ENCODE measurements at regions of chr1 and their contacts with region 1.

Region 1: GRCh38 chr1:67853704-67854103 is 20.4 kb upstream of the GNG12 start:
- DNase-seq: no peak
- ATAC-seq: peak; percentile 80; the same call in 1 of the 2 replicates
- H3K4me3 ChIP-seq: no peak overlapping the region
- H3K27ac ChIP-seq: no peak overlapping the region
- H3K4me1 ChIP-seq: peaks cover 8% of the 10 kb centered on the region; the same call in 1 of the 2 replicates
- H3K27me3 ChIP-seq: 0 out of 2 replicates have a peak, but pooled peaks cover 2% of the 10 kb centered on the region
- CTCF ChIP-seq: peak; percentile 84

Region 2: DNA sequence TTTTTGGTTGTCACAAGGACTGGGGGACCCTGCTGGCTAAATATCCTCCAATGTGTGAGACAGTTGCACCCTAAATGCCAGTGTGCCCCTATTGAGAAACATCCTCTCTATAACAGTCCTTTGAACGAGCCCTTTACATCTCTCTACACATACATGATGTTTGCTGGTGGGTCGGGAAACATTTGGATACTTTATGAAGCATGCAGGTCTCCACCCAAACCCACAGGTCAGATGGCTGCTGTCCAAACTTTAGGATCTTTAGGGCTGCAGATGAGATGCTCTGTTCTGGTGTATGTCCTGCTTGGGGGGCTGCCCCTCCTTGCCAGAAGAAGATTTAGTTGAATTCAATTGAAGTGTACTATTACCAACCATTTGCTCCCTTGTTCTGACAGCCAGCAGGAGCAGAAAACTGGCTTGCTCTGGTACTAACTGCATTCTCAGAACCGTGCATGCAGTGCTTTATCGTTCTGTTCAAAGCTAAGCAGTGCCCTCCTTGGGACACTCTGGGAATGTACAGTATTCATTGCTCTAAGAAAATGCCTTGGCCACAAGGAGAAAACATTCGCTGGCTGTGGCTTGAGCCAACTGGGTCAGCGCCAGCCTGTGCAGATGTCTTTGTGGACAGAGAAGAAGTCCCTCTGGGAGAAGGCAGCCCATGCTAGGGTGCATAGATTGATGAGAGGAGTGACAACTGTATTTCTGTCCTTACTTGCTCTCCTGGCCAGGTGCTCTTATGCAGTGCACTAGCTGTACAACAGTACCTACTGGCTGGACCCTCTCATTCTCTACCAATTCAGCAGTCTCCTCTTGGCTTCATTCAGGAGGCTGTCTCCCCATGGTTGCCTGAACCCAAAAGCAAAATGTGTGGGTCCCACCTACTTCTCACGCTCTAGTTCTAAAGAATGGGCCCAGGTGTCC is 258.1 kb after region 1 on chr1:
- CTCF ChIA-PET with region 1: no interaction called
- POLR2A ChIA-PET with region 1: no interaction called
- in situ Hi-C with region 1: no loop called
- intact Hi-C with region 1: loop called (anchors 1 kb)
- DNase-seq: no peak
- ATAC-seq: peak; percentile 93
- H3K4me3 ChIP-seq: no peak overlapping the region
- H3K27ac ChIP-seq: no peak overlapping the region
- H3K4me1 ChIP-seq: peaks cover 3% of the 10 kb centered on the region; the same call in 1 of the 2 replicates
- H3K27me3 ChIP-seq: no peaks in the 10 kb centered on the region
- CTCF ChIP-seq: peak; percentile 82

Region 3: DNA sequence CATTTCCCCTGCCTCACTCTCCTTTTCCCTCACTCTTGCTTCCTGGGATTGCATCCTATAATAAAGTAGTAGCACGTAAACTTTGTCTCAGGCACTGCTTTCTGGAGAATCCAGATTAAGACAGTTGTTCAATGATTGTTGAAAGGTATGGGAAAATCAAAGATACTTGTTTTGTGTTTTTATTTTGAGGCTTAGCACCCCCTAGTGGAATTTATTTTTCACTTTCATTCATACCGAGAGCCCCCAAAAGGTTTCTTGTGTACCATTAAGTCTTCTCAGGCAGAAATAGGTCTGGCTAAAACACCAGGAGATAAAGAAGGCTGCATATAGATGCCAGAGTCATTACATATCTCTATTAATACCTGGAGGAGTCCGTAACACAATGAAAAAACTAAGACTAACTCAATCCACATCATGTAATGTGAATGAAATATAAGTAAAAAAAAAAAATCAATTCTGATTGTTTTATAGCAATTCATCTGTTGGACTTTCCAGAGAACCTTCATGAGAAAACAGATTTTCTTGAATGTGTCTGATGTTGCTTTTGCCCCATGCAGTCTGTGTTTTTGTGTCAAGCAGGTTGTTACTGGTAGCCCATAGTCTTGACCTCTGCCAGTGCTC is 492.6 kb after region 1 on chr1:
- CTCF ChIA-PET with region 1: no interaction called
- POLR2A ChIA-PET with region 1: no interaction called
- in situ Hi-C with region 1: no loop called
- intact Hi-C with region 1: loop called (anchors 5 kb)
- DNase-seq: no peak
- ATAC-seq: no peak
- H3K4me3 ChIP-seq: no peak overlapping the region
- H3K27ac ChIP-seq: no peak overlapping the region
- H3K4me1 ChIP-seq: no peaks in the 10 kb centered on the region
- H3K27me3 ChIP-seq: no peaks in the 10 kb centered on the region
- CTCF ChIP-seq: peak; percentile 62; the same call in 1 of the 2 replicates